Panc1 (cell line): ENCODE measurements at regions of chr16 and their contacts with region 1.

Region 1: DNA sequence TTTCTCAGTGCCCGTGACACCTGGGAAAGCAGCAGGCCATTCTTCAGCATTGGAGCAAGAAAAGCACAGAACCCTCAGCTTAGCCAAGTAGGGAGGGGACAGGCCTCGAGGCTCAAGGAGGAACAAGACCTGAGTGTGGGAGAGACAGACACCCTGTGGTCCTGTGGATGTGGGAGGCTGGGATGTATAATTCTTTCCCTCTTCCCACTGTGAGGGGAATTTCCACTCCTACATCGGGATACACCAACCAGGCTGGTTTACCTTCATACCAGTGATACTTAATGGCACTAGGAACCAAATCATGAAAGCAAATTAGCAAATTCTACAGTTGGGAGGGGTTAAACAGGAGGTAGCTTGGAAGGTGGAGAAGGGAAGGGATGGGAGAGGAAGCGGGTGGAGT is 41.7 kb downstream of the LYRM1 start:
- DNase-seq: no peak
- ATAC-seq: no peak; the same call in 1 of the 2 replicates
- H3K4me3 ChIP-seq: no peak overlapping the region
- H3K27ac ChIP-seq: no peak overlapping the region
- H3K4me1 ChIP-seq: no peaks in the 10 kb centered on the region
- H3K27me3 ChIP-seq: no peaks in the 10 kb centered on the region
- CTCF ChIP-seq: no peak

Region 2: DNA sequence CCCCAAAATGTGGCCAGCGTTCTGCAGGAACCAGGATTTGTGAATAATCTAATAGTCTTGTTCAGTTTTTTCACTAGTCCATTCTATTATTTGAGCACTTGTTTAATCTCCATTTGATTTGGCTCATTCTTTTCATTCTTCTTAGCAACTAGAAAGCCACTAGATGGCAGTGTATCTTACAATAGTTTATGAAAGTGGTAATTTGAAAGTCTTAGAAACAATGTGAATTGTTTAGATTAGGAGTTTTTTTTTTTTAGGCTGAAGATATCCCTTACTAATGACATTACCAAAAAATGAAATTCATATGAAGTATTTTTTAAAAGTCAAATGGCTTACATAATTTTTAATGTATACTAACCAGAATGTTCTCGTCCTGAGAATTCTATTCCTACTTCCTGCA is 142.7 kb before region 1 on chr16:
- CTCF ChIA-PET with region 1: no interaction called
- POLR2A ChIA-PET with region 1: no interaction called
- in situ Hi-C with region 1: no loop called
- intact Hi-C with region 1: no loop called
- DNase-seq: no peak
- ATAC-seq: no peak
- H3K4me3 ChIP-seq: no peak overlapping the region
- H3K27ac ChIP-seq: no peak overlapping the region
- H3K4me1 ChIP-seq: no peaks in the 10 kb centered on the region; the same call in 1 of the 2 replicates
- H3K27me3 ChIP-seq: no peaks in the 10 kb centered on the region
- CTCF ChIP-seq: peak; percentile 45; the same call in 1 of the 2 replicates

Region 3: DNA sequence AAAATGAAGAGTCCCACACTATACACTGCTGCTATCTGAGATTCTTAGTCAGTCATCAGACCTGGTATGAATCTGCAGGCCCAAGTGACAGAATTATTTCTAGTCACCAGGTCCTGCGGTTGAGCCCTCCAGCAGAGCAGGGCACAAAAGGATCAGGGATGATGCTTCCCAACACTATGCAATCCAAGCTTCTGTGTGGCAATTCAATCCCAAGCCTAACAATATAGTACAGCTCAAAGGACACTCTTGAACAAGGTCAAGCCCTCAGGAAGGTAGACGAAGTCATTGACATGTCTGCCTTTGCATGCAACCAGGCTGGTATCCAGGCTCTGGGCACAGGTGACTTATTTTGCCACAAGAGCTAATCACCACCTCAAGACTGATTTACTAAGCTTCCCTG is 47.9 kb before region 1 on chr16:
- CTCF ChIA-PET with region 1: no interaction called
- POLR2A ChIA-PET with region 1: no interaction called
- in situ Hi-C with region 1: no loop called
- intact Hi-C with region 1: no loop called
- DNase-seq: no peak
- ATAC-seq: no peak
- H3K4me3 ChIP-seq: no peak overlapping the region
- H3K27ac ChIP-seq: no peak overlapping the region
- H3K4me1 ChIP-seq: peaks cover 15% of the 10 kb centered on the region
- H3K27me3 ChIP-seq: no peaks in the 10 kb centered on the region
- CTCF ChIP-seq: no peak

Region 4: DNA sequence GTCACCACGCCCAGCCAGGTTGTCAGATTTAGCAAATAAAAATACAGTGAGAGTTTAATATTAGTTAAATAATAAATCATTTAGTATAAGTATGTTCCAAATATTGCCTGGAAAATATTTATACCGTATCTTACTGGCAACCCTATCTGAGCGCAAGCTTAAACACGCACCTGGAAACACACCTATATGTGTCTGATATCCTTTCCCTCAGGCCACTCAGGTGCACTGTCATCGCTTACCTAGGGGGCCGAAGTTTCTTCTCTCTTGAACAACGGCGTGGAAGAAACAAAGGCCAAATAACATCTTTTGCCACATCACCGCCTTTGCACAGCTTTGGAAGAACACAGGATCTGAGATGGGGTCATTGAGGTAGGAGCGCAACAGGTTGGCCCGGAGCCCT is 12.3 kb after region 1 on chr16:
- CTCF ChIA-PET with region 1: no interaction called
- POLR2A ChIA-PET with region 1: interaction called, 12 read pairs
- in situ Hi-C with region 1: no loop called
- intact Hi-C with region 1: no loop called
- DNase-seq: no peak
- ATAC-seq: no peak
- H3K4me3 ChIP-seq: no peak overlapping the region
- H3K27ac ChIP-seq: no peak overlapping the region
- H3K4me1 ChIP-seq: no peaks in the 10 kb centered on the region
- H3K27me3 ChIP-seq: no peaks in the 10 kb centered on the region; the same call in 1 of the 2 replicates
- CTCF ChIP-seq: no peak